ENCODE measurements at regions of chr9 and their contacts with region 1.

Region 1: DNA sequence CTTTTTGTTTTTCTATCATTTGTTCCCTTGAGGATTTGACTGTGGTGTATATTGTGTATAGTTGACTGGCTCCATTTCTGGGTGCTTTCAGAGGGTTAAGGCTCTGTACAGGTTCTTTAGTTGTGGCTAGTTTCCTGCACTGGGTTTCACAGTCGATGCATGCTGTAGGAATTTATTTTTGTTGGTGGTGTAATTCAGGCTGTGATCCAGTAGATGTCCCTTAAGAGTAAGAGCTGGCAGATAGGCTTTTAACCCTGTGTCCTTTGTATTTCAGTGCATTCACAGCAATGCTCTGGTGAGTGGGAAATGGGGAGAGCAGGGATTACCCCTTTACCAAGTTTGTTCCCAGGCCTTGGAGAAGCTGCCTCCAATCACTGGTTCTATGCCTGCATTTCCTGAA is 112.9 kb downstream of the SPATA31D1 start:
- DNase-seq: peak; percentile 88
- H3K4me3 ChIP-seq: no peak overlapping the region
- H3K27ac ChIP-seq: peak overlapping the region; percentile 41
- H3K4me1 ChIP-seq: peaks cover 47% of the 10 kb centered on the region
- CTCF ChIP-seq: peak; percentile 90

Region 2: GRCh38 chr9:82080265-82080664 is 21.2 kb before region 1 on chr9:
- CTCF ChIA-PET with region 1: no interaction called
- POLR2A ChIA-PET with region 1: interaction called, 10 read pairs
- intact Hi-C with region 1: no loop called
- DNase-seq: peak; percentile 86
- H3K4me3 ChIP-seq: peak overlapping the region; percentile 7
- H3K27ac ChIP-seq: peak overlapping the region; percentile 71
- H3K4me1 ChIP-seq: peaks cover 33% of the 10 kb centered on the region
- CTCF ChIP-seq: no peak

Region 3: DNA sequence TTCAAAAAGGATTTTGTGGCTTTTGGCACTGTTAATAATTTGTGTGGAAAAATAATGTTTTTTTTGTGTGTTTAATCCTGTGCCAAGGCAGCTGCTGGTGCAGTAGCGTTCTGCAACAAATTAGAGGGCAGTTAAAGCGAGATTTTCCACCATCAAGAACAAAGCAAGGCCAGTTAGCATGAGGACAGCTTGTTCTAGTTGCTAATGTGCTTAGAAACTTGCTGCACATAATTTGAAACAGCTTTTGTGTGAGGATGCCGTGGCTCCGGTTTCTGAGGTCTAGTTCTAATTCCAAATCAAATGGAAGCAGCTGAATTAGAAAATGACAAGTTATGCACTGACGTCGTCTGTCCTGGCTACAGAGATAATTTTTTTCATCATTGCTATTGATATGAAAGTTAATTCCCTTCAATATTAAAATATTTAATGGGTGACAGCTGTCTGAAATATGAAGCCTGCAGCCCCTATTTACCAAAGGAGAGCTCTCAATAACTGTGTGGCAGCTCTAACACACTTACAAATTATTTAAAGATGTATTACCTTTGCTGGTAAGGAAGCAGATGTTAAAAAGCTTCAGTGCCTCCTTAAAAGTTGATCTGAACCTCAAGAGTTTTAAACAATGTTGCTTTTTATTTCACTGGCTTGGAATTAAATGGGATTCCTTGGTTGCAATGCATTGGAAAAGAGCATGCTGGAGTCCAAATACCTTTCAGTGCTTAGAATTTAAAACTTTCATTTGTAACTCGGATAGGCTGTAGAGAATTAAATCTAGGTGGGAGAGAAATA is 15.7 kb after region 1 on chr9:
- CTCF ChIA-PET with region 1: interaction called, 4 read pairs
- POLR2A ChIA-PET with region 1: interaction called, 32 read pairs
- intact Hi-C with region 1: no loop called
- DNase-seq: no peak
- H3K4me3 ChIP-seq: no peak overlapping the region
- H3K27ac ChIP-seq: no peak overlapping the region
- H3K4me1 ChIP-seq: peaks cover 26% of the 10 kb centered on the region
- CTCF ChIP-seq: no peak

Region 4: GRCh38 chr9:82184524-82184923 is 83.0 kb after region 1 on chr9:
- CTCF ChIA-PET with region 1: no interaction called
- POLR2A ChIA-PET with region 1: interaction called, 11 read pairs
- intact Hi-C with region 1: loop called (anchors 5 kb)
- DNase-seq: peak; percentile 87
- H3K4me3 ChIP-seq: peak overlapping the region; percentile 51
- H3K27ac ChIP-seq: peak overlapping the region; percentile 86
- H3K4me1 ChIP-seq: peaks cover 56% of the 10 kb centered on the region
- CTCF ChIP-seq: no peak

Region 5: GRCh38 chr9:82504620-82505019 is 403.1 kb after region 1 on chr9:
- CTCF ChIA-PET with region 1: no interaction called
- POLR2A ChIA-PET with region 1: no interaction called
- intact Hi-C with region 1: loop called (anchors 10 kb)
- DNase-seq: no peak
- H3K4me3 ChIP-seq: no peak overlapping the region
- H3K27ac ChIP-seq: no peak overlapping the region
- H3K4me1 ChIP-seq: no peaks in the 10 kb centered on the region
- CTCF ChIP-seq: peak; percentile 45

Measured in OCI-LY7 (cell line).